ENCODE measurements at regions of chr5 and their contacts with region 1.

Region 1: GRCh38 chr5:150449517-150450339 is at the start of gene RPS14:
- DNase-seq: peak; percentile 99
- ATAC-seq: peak; percentile 94
- H3K4me3 ChIP-seq: peak within 1 kb of the TSS; percentile 80 to 98 (median 97)
- H3K4me3 Mint-ChIP-seq: peak within 1 kb of the TSS; percentile 100
- H3K27ac ChIP-seq: peak within 1 kb of the TSS; percentile 90 to 98
- H3K27ac Mint-ChIP-seq: peak within 1 kb of the TSS; percentile 100
- H3K4me1 ChIP-seq: peaks cover 23 to 32% of the 10 kb centered on the region in 2 donors
- H3K4me1 Mint-ChIP-seq: peaks cover 30% of the 10 kb centered on the region
- H3K27me3 ChIP-seq: no peaks in the 10 kb centered on the region
- H3K27me3 Mint-ChIP-seq: no peaks in the 10 kb centered on the region
- CTCF ChIP-seq: peak; percentile 95
- total RNA-seq, gene RPS14: 3,565 and 3,740 TPM in 2 replicates

Region 2: DNA sequence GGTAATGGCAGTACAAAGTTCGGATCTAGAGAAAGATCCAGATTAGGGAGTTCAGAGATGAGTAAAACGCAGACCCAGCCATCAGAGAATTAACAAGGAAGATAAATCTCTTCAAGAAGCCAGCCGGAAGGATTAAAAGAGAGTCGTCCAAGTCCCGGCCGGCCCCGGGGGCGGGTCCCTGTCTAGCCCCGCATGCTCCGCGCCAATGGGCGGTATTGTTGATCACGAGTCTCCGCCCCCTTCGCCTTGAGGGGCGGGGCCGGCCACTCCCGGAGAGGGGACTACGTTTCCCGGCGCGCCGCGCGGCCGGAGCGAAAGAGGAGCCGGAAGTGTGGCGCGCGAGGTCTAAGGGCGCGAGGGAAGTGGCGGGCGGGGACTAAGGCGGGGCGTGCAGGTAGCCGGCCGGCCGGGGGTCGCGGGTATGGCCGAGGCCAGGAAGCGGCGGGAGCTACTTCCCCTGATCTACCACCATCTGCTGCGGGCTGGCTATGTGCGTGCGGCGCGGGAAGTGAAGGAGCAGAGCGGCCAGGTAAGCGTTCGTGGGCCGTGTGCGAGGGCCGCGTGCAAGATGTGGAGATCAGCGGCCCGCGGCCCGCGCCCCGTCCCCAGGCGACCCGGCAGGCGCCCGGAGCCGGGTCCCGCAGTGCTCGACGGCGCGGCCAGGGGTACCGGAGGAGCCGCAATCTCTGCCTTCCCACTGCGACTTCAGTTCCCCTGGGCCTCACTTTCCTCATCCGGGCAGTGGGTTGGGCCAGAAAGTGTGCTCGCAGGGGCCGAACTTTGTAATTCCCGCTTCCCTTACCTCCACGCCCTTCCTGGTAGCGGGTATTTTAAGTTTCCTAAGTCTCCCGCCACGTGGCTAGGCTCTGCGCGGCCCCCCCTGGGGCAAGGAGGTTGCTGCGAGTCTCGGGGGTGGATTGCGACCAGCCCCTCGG is 92.1 kb before region 1 on chr5 and contains the start of gene TCOF1:
- CTCF ChIA-PET with region 1: no interaction called
- POLR2A ChIA-PET with region 1: interaction called, 4 read pairs
- intact Hi-C with region 1: loop called (anchors 1 kb)
- DNase-seq: peak; percentile 97
- ATAC-seq: peak; percentile 99
- H3K4me3 ChIP-seq: peak within 1 kb of the TSS; percentile 53 to 77 (median 69)
- H3K4me3 Mint-ChIP-seq: peak within 1 kb of the TSS; percentile 90
- H3K27ac ChIP-seq: peak within 1 kb of the TSS; percentile 23 to 68
- H3K27ac Mint-ChIP-seq: peak within 1 kb of the TSS; percentile 88
- H3K4me1 ChIP-seq: peaks cover 35 to 54% of the 10 kb centered on the region in 2 donors
- H3K4me1 Mint-ChIP-seq: peaks cover 50% of the 10 kb centered on the region
- H3K27me3 ChIP-seq: no peaks in the 10 kb centered on the region
- H3K27me3 Mint-ChIP-seq: no peaks in the 10 kb centered on the region
- CTCF ChIP-seq: no peak
- total RNA-seq, gene TCOF1: 62.4 and 66.5 TPM in 2 replicates

Region 3: DNA sequence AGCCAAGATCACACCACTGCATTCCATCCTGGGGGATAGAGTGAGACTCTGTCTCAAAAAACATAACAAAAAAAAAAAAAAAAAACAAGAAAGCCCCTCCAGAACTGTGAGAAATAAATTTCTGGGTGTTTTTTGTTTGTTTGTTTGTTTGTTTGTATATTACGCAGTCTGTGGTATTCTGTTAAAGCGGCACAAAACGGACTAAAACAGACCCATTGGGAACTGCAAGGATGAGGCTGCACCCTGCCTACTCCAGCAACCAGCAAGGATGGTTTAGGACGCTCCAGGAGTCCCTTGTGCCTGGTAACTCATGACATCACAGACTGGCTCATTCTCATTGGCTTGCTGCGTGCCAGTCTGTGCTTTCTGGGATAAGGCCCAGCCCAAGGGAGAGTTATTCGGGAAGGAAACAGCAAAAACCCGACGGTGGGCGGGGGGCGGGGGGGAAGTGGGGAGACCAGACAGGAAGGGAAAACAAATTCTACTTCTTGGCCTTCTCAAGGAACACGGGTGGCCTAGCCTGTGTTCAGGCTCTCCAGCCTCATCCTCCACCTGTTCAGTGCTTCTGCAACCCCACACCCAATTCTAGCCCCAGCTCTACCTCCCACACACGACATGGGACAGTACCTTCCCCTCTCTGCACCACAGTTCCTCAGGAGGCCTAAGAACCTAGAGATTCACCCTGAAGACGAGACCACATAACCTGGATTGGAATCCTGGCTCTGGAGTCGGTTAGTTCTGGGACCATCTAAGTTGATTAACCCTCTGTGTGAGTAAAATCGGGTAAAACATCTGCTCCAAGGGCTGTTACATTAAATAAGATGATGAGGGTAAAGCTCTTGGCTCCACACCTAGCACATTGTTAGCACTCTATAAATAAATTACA is 39.8 kb before region 1 on chr5:
- CTCF ChIA-PET with region 1: interaction called, 9 read pairs
- POLR2A ChIA-PET with region 1: interaction called, 47 read pairs
- intact Hi-C with region 1: loop called (anchors 1 kb)
- DNase-seq: peak; percentile 81
- ATAC-seq: peak; percentile 4
- H3K4me3 ChIP-seq: peak overlapping the region; percentile 78 to 100 (median 94)
- H3K4me3 Mint-ChIP-seq: peak overlapping the region; percentile 95
- H3K27ac ChIP-seq: peak overlapping the region; percentile 99 to 100
- H3K27ac Mint-ChIP-seq: peak overlapping the region; percentile 99
- H3K4me1 ChIP-seq: peaks cover 52 to 66% of the 10 kb centered on the region in 2 donors
- H3K4me1 Mint-ChIP-seq: peaks cover 68% of the 10 kb centered on the region
- H3K27me3 ChIP-seq: no peaks in the 10 kb centered on the region
- H3K27me3 Mint-ChIP-seq: no peaks in the 10 kb centered on the region
- CTCF ChIP-seq: no peak

Region 4: GRCh38 chr5:150436141-150436680 is 13.5 kb before region 1 on chr5:
- CTCF ChIA-PET with region 1: interaction called, 20 read pairs
- POLR2A ChIA-PET with region 1: interaction called, 6 read pairs
- intact Hi-C with region 1: loop called (anchors 1 kb)
- DNase-seq: peak; percentile 94
- ATAC-seq: peak; percentile 93
- H3K4me3 ChIP-seq: peak overlapping the region in 1 of 5 experiments; percentile 1
- H3K4me3 Mint-ChIP-seq: peak overlapping the region; percentile 74
- H3K27ac ChIP-seq: peak overlapping the region; percentile 56 to 68
- H3K27ac Mint-ChIP-seq: peak overlapping the region; percentile 95
- H3K4me1 ChIP-seq: peaks cover 46 to 52% of the 10 kb centered on the region in 2 donors
- H3K4me1 Mint-ChIP-seq: peaks cover 42% of the 10 kb centered on the region
- H3K27me3 ChIP-seq: no peaks in the 10 kb centered on the region
- H3K27me3 Mint-ChIP-seq: no peaks in the 10 kb centered on the region
- CTCF ChIP-seq: peak; percentile 84

Region 5: GRCh38 chr5:150523472-150524350 is 74.0 kb after region 1 on chr5:
- CTCF ChIA-PET with region 1: interaction called, 126 read pairs
- POLR2A ChIA-PET with region 1: no interaction called
- intact Hi-C with region 1: loop called (anchors 2 kb)
- DNase-seq: peak; percentile 66
- ATAC-seq: no peak
- H3K4me3 ChIP-seq: no peak overlapping the region
- H3K4me3 Mint-ChIP-seq: no peak overlapping the region
- H3K27ac ChIP-seq: no peak overlapping the region
- H3K27ac Mint-ChIP-seq: no peak overlapping the region
- H3K4me1 ChIP-seq: no peaks in the 10 kb centered on the region
- H3K4me1 Mint-ChIP-seq: no peaks in the 10 kb centered on the region
- H3K27me3 ChIP-seq: no peaks in the 10 kb centered on the region
- H3K27me3 Mint-ChIP-seq: no peaks in the 10 kb centered on the region
- CTCF ChIP-seq: peak; percentile 68

Region 6: DNA sequence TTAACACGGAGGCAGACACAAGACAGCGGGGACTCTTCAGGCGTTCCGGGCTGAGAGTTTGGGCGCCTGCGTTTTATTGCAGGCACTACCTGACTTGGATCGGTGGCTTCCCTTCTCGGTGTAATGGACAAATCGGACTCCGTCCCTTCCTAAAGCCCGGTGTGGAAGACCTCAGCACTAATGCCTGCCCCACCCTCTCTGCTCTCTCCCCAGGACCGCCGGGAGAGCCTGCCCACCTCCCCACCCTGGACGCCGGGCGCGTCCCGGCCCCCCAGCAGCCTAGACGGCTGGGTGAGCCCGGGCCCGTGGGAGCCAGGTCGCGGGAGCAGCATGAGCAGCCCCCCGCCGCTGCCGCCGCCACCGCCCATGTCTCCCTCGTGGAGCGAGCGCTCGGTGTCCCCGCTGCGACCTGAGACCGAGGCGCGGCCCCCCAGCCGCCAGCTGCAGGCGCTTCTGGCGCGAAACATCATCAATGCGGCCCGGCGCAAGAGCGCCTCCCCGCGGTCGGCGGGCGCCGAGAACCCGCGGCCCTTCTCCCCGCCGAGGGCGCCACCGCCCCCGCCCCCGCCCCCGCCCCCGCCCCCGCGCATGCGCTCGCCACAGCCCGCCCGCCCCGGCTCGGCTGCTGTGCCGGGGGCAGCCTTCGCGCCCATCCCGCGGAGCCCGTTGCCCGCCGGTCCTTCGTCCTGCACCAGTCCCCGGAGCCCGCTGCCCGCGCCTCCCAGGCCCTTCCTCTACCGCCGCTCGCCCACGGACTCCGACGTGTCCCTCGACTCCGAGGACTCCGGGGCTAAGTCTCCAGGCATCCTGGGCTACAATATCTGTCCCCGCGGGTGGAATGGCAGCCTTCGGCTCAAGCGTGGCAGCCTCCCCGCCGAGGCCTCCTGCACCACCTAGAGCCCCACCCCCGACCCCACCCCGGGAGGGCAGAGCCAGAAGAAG is 206.7 kb after region 1 on chr5:
- CTCF ChIA-PET with region 1: no interaction called
- POLR2A ChIA-PET with region 1: no interaction called
- intact Hi-C with region 1: loop called (anchors 2 kb)
- DNase-seq: peak; percentile 89
- ATAC-seq: peak; percentile 91
- H3K4me3 ChIP-seq: peak overlapping the region; percentile 21 to 69 (median 59)
- H3K4me3 Mint-ChIP-seq: peak overlapping the region; percentile 81
- H3K27ac ChIP-seq: no peak overlapping the region
- H3K27ac Mint-ChIP-seq: peak overlapping the region; percentile 84
- H3K4me1 ChIP-seq: peaks cover 10 to 15% of the 10 kb centered on the region in 2 donors
- H3K4me1 Mint-ChIP-seq: peaks cover 19% of the 10 kb centered on the region
- H3K27me3 ChIP-seq: no peaks in the 10 kb centered on the region
- H3K27me3 Mint-ChIP-seq: peaks cover 4% of the 10 kb centered on the region
- CTCF ChIP-seq: peak; percentile 77

Region 7: DNA sequence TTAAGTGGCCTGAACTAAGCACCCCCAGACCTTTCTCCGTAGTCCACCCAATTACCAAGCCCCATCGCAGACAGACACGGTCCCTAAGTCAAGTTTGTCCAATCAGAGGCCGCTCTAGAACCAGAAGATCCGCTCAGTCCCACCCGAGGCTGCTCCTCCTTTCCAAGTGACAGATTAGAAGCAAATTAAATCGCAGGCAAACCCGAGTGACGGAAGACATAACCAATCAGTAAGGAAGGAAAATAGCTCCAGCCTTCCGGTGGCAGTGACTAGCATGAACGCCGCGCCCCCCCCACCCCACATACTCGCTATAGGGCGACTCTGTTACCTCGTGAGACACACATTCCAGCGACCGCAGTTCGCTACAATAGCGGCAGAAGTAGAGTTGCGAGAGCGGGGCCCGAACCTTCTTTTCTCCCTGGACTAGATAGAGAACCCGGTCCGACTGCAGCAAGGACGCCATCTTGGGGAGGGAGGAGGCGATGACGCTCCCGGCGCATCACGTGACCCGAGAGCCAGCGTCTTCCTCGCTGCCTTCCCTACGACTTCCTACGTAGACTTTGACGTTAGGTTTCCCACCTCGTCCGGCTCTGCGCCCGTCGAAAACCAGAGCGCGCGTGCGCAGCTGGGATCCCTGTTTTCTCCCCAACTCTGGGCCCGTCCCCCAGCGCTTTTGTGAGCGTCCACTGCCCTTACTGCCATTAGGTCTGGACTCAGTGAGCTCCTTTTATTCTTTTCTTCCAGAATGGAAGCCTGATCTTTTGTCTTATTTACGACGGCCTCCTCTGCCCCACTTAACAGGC is 309.0 kb after region 1 on chr5 and contains the start of gene DCTN4:
- CTCF ChIA-PET with region 1: interaction called, 7 read pairs
- POLR2A ChIA-PET with region 1: interaction called, 3 read pairs
- intact Hi-C with region 1: loop called (anchors 2 kb)
- DNase-seq: peak; percentile 98
- ATAC-seq: peak; percentile 91
- H3K4me3 ChIP-seq: peak within 1 kb of the TSS; percentile 81 to 95 (median 85)
- H3K4me3 Mint-ChIP-seq: no peak within 1 kb of the TSS
- H3K27ac ChIP-seq: peak within 1 kb of the TSS; percentile 91 to 93
- H3K27ac Mint-ChIP-seq: no peak within 1 kb of the TSS
- H3K4me1 ChIP-seq: peaks cover 15 to 20% of the 10 kb centered on the region in 2 donors
- H3K4me1 Mint-ChIP-seq: peaks cover 23% of the 10 kb centered on the region
- H3K27me3 ChIP-seq: peaks cover 0 to 6% (median 3%) of the 10 kb centered on the region in 4 experiments
- H3K27me3 Mint-ChIP-seq: peaks cover 3% of the 10 kb centered on the region
- CTCF ChIP-seq: no peak
- total RNA-seq, gene DCTN4: 54.4 and 58.4 TPM in 2 replicates